HepG2 (cell line): ENCODE measurements at regions of chr3 and their contacts with region 1.

Region 1: GRCh38 chr3:57221883-57222282 is 5.6 kb upstream of the APPL1 start:
- DNase-seq: peak; percentile 20
- ATAC-seq: peak; percentile 49; the same call in 2 of the 3 replicates
- H3K4me3 ChIP-seq: no peak overlapping the region
- H3K27ac ChIP-seq: no peak overlapping the region
- H3K4me1 ChIP-seq: peaks cover 12% of the 10 kb centered on the region
- H3K27me3 ChIP-seq: no peaks in the 10 kb centered on the region
- CTCF ChIP-seq: peak; percentile 59
- EP300 ChIP-seq: no peak
- POLR2A ChIP-seq: no peak
- RAD21 ChIP-seq: no peak

Region 2: GRCh38 chr3:57078344-57078634 is 143.6 kb before region 1 on chr3:
- CTCF ChIA-PET with region 1: no interaction called
- POLR2A ChIA-PET with region 1: no interaction called
- in situ Hi-C with region 1: no loop called
- intact Hi-C with region 1: no loop called
- DNase-seq: peak; percentile 28
- ATAC-seq: peak; percentile 56
- H3K4me3 ChIP-seq: peak overlapping the region; percentile 71 to 93 (median 76)
- H3K27ac ChIP-seq: peak overlapping the region; percentile 62
- H3K4me1 ChIP-seq: peaks cover 43% of the 10 kb centered on the region
- H3K27me3 ChIP-seq: peaks cover 0 to 4% of the 10 kb centered on the region in 2 experiments; a peak in 1 of 5 replicates
- CTCF ChIP-seq: no peak
- EP300 ChIP-seq: no peak
- POLR2A ChIP-seq: no peak
- RAD21 ChIP-seq: no peak

Region 3: GRCh38 chr3:57100046-57100695 is 121.7 kb before region 1 on chr3:
- CTCF ChIA-PET with region 1: interaction called, 3 read pairs
- POLR2A ChIA-PET with region 1: no interaction called
- in situ Hi-C with region 1: loop called (anchors 5 kb)
- intact Hi-C with region 1: loop called (anchors 2 kb)
- DNase-seq: peak; percentile 66
- ATAC-seq: peak; percentile 84
- H3K4me3 ChIP-seq: no peak overlapping the region
- H3K27ac ChIP-seq: no peak overlapping the region
- H3K4me1 ChIP-seq: peaks cover 4% of the 10 kb centered on the region; the same call in 1 of the 2 replicates
- H3K27me3 ChIP-seq: no peaks in the 10 kb centered on the region; a peak in 1 of 5 replicates
- CTCF ChIP-seq: peak; percentile 91
- EP300 ChIP-seq: no peak
- POLR2A ChIP-seq: no peak
- RAD21 ChIP-seq: peak; percentile 74

Region 4: DNA sequence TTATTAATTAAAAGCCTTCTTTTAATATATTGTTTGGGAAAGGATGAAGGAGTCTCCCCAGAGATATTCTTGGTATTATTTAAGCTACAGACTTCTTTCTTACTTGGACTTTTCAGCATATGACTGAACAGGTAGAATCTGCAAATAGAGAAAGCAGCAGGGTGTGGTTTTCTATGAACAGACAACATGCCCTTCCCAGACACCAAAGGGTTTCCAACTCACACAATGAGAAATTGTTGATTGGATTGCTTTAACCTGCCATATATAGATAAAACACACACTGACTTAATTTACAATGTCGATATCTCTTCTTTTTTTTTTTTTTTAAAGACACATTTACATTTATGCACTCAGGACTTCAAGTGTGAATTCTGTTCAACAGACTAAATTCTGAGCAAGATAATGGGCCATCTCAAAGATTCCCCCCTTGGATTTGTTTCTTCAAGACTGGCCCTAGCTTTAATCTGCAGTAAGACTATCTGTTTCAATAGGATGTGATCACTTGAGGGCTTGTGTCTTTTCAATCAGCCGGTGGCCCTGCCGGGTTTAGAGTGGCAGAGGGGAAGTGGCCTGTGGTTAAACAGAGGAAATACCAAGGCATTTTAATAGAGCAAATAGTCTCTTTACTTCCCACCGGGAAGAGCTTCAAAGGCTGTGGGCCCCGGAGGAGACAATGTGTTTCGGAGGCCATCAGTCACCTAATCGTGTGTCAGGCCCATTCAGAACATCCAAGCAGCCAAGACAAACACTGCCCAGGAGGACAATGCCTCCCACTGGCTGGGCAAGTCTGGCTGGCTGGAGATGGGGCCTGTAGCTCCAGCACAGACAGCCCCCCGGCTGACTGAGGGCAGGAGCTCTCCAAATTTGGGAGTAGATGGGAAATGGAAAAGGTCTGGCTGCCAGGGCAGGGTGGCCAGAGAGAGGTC is 62.8 kb before region 1 on chr3:
- CTCF ChIA-PET with region 1: no interaction called
- POLR2A ChIA-PET with region 1: no interaction called
- in situ Hi-C with region 1: no loop called
- intact Hi-C with region 1: no loop called
- DNase-seq: no peak
- ATAC-seq: no peak
- H3K4me3 ChIP-seq: no peak overlapping the region
- H3K27ac ChIP-seq: no peak overlapping the region
- H3K4me1 ChIP-seq: peaks cover 3% of the 10 kb centered on the region
- H3K27me3 ChIP-seq: peaks cover 3 to 71% of the 10 kb centered on the region in 2 experiments
- CTCF ChIP-seq: no peak
- EP300 ChIP-seq: no peak
- POLR2A ChIP-seq: no peak
- RAD21 ChIP-seq: no peak

Region 5: DNA sequence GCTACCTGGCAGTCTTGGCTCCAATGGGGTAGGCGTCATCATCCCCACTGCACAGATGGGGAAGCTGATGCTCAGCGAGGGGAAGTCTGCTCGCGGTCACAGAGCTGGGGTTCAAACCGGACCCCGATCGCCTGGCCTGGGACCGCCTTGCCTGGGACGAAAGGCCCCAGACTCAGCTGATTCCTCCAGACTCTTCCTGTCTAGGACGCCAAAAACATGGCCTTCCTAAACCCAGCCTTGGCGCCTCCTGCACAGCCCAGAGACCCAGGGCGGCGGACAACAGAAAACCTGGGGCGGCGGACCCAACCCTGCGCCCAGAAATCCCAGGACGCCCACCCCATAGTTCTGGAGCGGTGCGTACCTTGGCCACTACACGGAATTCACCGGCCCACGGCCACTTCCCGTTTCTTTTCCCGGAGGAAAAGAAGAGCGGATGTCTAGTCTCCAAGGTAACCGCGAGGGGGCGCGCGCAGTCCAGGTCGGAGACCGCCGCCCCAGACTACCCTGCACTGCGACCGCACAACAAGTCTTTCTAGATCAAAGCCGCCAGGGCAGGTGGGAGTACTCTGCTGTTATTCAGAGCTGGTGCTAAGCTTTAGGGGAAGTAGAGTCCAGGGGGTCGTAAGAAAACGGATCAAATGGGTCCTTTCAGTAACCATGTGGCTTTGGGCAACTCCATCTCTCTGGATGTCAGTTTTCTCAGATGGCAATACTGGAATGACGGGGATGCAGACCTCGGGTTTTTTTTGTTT is 51.8 kb before region 1 on chr3:
- CTCF ChIA-PET with region 1: interaction called, 9 read pairs
- POLR2A ChIA-PET with region 1: no interaction called
- in situ Hi-C with region 1: no loop called
- intact Hi-C with region 1: loop called (anchors 1 kb)
- DNase-seq: peak; percentile 58
- ATAC-seq: peak; percentile 92
- H3K4me3 ChIP-seq: peak overlapping the region; percentile 68 to 82 (median 75); a peak in 5 of 6 replicates
- H3K27ac ChIP-seq: no peak overlapping the region
- H3K4me1 ChIP-seq: peaks cover 25% of the 10 kb centered on the region
- H3K27me3 ChIP-seq: peaks cover 0 to 26% of the 10 kb centered on the region in 2 experiments; a peak in 2 of 5 replicates
- CTCF ChIP-seq: peak; percentile 94
- EP300 ChIP-seq: no peak
- POLR2A ChIP-seq: no peak
- RAD21 ChIP-seq: peak; percentile 81